ENCODE measurements at regions of chr16 and their contacts with region 1.

Region 1: GRCh38 chr16:84952335-84953189 is 58.8 kb downstream of the ZDHHC7 start:
- DNase-seq: peak; percentile 82
- ATAC-seq: peak; percentile 95
- H3K4me3 Mint-ChIP-seq: no peak overlapping the region
- H3K27ac Mint-ChIP-seq: no peak overlapping the region
- H3K4me1 Mint-ChIP-seq: peaks cover 2% of the 10 kb centered on the region
- H3K27me3 Mint-ChIP-seq: peaks cover 3% of the 10 kb centered on the region
- CTCF ChIP-seq: peak; percentile 84

Region 2: DNA sequence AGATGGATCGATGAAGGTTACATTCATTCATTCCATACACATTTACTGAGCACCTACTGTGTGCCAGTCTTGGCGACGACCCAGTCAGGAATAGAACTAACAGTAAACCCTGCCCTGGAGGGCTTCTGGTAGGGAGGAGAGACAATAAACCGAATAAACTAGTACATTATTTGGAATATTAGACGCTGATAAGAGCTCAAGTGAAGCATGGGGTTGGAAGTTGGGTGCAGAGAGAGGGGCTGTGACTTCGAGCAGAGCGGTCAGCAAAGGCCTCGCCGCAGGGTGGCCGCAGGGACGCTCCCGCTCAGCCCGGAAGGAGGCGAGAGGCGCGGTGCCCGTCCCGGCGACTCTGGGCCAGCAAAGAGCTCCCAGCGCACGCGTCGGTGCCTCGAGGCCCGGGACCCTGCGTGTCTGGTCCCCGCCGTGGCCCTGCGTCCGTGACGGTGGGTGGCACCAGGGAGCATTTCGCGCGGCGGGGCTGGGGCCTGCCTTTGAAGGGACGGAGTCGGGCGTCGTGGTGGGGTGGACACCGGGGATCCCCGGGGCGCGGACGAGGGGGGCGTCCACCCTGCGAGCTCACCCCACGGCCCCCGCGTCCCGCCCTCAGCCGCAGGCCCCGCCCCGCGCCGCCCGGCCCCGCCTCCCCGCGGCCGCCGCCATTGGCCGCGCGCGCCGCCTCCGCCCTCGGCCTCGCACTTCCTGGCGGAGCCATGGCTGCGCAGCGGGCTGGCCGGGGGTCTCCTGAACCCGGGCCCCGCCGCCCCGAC is 304.6 kb before region 1 on chr16 and contains the start of gene KLHL36:
- CTCF ChIA-PET with region 1: no interaction called
- POLR2A ChIA-PET with region 1: no interaction called
- intact Hi-C with region 1: loop called (anchors 10 kb)
- DNase-seq: peak; percentile 67
- ATAC-seq: peak; percentile 89
- H3K4me3 Mint-ChIP-seq: peak within 1 kb of the TSS; percentile 77
- H3K27ac Mint-ChIP-seq: peak within 1 kb of the TSS; percentile 83
- H3K4me1 Mint-ChIP-seq: peaks cover 35% of the 10 kb centered on the region
- H3K27me3 Mint-ChIP-seq: peaks cover 2% of the 10 kb centered on the region
- CTCF ChIP-seq: no peak
- total RNA-seq, gene KLHL36: 41.0 to 44.0 TPM

Region 3: GRCh38 chr16:84925092-84925772 is 27.3 kb before region 1 on chr16:
- CTCF ChIA-PET with region 1: interaction called, 40 read pairs
- POLR2A ChIA-PET with region 1: no interaction called
- intact Hi-C with region 1: no loop called
- DNase-seq: peak; percentile 82
- ATAC-seq: peak; percentile 62
- H3K4me3 Mint-ChIP-seq: no peak overlapping the region
- H3K27ac Mint-ChIP-seq: no peak overlapping the region
- H3K4me1 Mint-ChIP-seq: no peaks in the 10 kb centered on the region
- H3K27me3 Mint-ChIP-seq: peaks cover 3% of the 10 kb centered on the region
- CTCF ChIP-seq: peak; percentile 92

Region 4: GRCh38 chr16:84963066-84963465 is 10.5 kb after region 1 on chr16:
- CTCF ChIA-PET with region 1: interaction called, 76 read pairs
- POLR2A ChIA-PET with region 1: no interaction called
- intact Hi-C with region 1: no loop called
- DNase-seq: no peak
- ATAC-seq: no peak
- H3K4me3 Mint-ChIP-seq: no peak overlapping the region
- H3K27ac Mint-ChIP-seq: no peak overlapping the region
- H3K4me1 Mint-ChIP-seq: peaks cover 3% of the 10 kb centered on the region
- H3K27me3 Mint-ChIP-seq: peaks cover 1% of the 10 kb centered on the region
- CTCF ChIP-seq: no peak